A549 (cell line): ENCODE measurements at regions of chr1 and their contacts with region 1.

Region 1: DNA sequence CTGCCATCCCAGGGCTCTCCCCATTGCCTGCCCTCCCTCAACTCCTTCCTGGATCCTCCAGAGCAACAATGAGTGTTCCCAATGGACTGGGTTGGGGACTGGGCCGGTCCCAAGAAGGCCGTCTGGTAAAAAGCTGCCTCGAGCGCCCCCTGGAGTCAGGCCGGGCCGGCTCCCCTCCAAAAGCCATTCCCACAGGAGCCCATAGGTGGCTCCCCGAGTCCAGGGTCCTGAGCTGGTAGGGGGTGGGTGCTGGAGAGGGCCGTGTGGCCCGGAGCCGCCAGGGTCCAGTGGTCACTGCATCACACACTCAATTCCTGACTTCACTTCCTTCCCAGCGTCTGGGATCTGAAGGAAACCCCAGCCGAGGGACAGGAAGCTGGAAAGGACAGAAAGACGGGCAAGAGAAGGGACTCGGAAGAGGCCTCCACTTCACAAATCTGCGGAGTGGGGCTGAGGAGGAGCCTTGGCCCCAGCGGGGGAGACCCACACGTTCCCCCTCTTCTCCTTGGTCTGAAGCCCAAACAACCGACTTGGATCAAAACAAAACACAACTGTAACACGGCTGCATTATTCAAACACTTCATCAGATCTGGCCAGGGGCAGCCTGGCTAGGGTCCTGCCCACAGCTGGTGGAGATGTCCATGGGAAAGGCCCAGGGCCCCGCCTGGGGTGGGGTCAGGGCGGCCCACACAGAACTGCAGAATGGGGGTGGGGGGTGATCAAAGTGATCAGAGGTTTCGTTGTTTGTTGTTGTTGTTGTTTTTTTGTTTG is 10.9 kb upstream of the ALDH4A1 start:
- DNase-seq: peak; percentile 74 to 92
- ATAC-seq: peak; percentile 83 to 91
- H3K4me3 ChIP-seq: no peak overlapping the region
- H3K27ac ChIP-seq: peak overlapping the region; percentile 46 to 79; a peak in 4 of 6 replicates
- H3K4me1 ChIP-seq: peaks cover 24% of the 10 kb centered on the region
- CTCF ChIP-seq: peak; percentile 95
- EP300 ChIP-seq: no peak
- POLR2A ChIP-seq: no peak
- RAD21 ChIP-seq: peak; percentile 80 to 89

Region 2: GRCh38 chr1:18693256-18694098 is 219.8 kb before region 1 on chr1:
- CTCF ChIA-PET with region 1: no interaction called
- POLR2A ChIA-PET with region 1: no interaction called
- DNase-seq: no peak
- ATAC-seq: no peak
- H3K4me3 ChIP-seq: no peak overlapping the region
- H3K27ac ChIP-seq: no peak overlapping the region
- H3K4me1 ChIP-seq: no peaks in the 10 kb centered on the region
- CTCF ChIP-seq: no peak
- EP300 ChIP-seq: no peak
- POLR2A ChIP-seq: no peak
- RAD21 ChIP-seq: no peak

Region 3: GRCh38 chr1:18902523-18903290 is 10.5 kb before region 1 on chr1 and contains the start of gene ALDH4A1:
- CTCF ChIA-PET with region 1: interaction called, 47 read pairs
- POLR2A ChIA-PET with region 1: interaction called, 3 read pairs
- DNase-seq: peak; percentile 96 to 99
- ATAC-seq: peak; percentile 91 to 97
- H3K4me3 ChIP-seq: peak within 1 kb of the TSS; percentile 97
- H3K27ac ChIP-seq: peak within 1 kb of the TSS; percentile 86 to 91
- H3K4me1 ChIP-seq: peaks cover 35% of the 10 kb centered on the region
- CTCF ChIP-seq: no peak
- EP300 ChIP-seq: no peak
- POLR2A ChIP-seq: peak; percentile 31
- RAD21 ChIP-seq: no peak
- polyA plus RNA-seq, gene ALDH4A1: 9.4 and 9.7 TPM in 2 replicates

Region 4: GRCh38 chr1:18941221-18942141 is 28.2 kb after region 1 on chr1:
- CTCF ChIA-PET with region 1: interaction called, 23 read pairs
- POLR2A ChIA-PET with region 1: no interaction called
- DNase-seq: peak in 1 of 2 experiments; percentile 66
- ATAC-seq: no peak; a peak in 1 of 6 replicates
- H3K4me3 ChIP-seq: no peak overlapping the region
- H3K27ac ChIP-seq: peak overlapping the region; percentile 37 to 68; a peak in 5 of 6 replicates
- H3K4me1 ChIP-seq: peaks cover 83% of the 10 kb centered on the region
- CTCF ChIP-seq: no peak
- EP300 ChIP-seq: no peak
- POLR2A ChIP-seq: no peak
- RAD21 ChIP-seq: no peak

Region 5: DNA sequence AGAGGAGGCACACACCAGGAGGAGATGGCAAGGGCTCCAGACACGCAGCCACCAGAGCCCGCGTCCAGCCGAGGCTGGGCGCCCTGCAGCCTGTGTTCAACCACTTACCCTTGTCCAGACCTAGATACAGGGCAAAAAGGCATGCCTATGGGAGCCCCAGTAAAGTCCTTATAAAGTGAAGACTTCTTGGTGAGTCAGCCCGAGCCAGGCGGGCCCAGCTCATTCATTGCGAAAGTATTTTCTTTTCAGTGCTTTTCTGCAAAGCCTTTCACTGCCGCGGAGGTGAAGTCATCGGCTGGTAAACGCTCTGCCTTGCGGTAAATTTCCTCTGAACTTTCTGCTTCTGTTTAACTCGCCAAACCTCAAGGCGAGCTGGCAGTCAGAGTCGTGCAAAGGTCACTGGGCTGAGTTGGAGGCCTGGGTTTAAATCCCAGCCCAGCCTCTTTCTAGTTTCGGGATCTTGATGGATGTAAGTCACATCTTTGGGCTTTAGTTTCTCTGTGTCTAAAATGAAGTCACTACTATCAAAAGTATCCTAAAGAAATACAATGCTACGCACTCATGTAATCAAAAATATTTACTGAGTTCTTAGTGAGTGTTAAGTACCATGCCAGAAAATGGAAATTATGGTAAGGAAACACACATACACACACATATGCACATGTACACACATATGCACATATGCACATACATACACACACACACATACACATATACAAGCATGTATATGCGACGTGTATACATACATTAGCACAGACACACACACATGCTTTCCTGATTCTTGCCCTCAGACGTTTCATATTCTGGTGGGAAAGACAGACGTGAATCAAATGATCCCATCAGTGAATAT is 98.0 kb after region 1 on chr1:
- CTCF ChIA-PET with region 1: interaction called, 20 read pairs
- POLR2A ChIA-PET with region 1: interaction called, 4 read pairs
- DNase-seq: peak; percentile 69 to 96
- ATAC-seq: peak; percentile 69 to 82
- H3K4me3 ChIP-seq: 0 out of 3 replicates have a peak overlapping the region, but pooled peaks have one; percentile 11
- H3K27ac ChIP-seq: peak overlapping the region; percentile 97 to 100
- H3K4me1 ChIP-seq: peaks cover 80% of the 10 kb centered on the region
- CTCF ChIP-seq: no peak
- EP300 ChIP-seq: peak; percentile 77 to 87; a peak in 4 of 5 replicates
- POLR2A ChIP-seq: peak; percentile 33; the same call in 1 of the 2 replicates
- RAD21 ChIP-seq: peak; percentile 2 to 55; a peak in 4 of 5 replicates

Region 6: GRCh38 chr1:19113697-19114092 is 200.4 kb after region 1 on chr1:
- CTCF ChIA-PET with region 1: interaction called, 34 read pairs
- POLR2A ChIA-PET with region 1: no interaction called
- DNase-seq: peak; percentile 58 to 59
- ATAC-seq: peak; percentile 87 to 92
- H3K4me3 ChIP-seq: no peak overlapping the region
- H3K27ac ChIP-seq: no peak overlapping the region
- H3K4me1 ChIP-seq: no peaks in the 10 kb centered on the region
- CTCF ChIP-seq: peak; percentile 51
- EP300 ChIP-seq: no peak
- POLR2A ChIP-seq: no peak
- RAD21 ChIP-seq: peak; percentile 44 to 54; a peak in 4 of 5 replicates